Sigmoid colon (tissue), 7 donors: ENCODE measurements at regions of chr14 and their contacts with region 1.

Region 1: DNA sequence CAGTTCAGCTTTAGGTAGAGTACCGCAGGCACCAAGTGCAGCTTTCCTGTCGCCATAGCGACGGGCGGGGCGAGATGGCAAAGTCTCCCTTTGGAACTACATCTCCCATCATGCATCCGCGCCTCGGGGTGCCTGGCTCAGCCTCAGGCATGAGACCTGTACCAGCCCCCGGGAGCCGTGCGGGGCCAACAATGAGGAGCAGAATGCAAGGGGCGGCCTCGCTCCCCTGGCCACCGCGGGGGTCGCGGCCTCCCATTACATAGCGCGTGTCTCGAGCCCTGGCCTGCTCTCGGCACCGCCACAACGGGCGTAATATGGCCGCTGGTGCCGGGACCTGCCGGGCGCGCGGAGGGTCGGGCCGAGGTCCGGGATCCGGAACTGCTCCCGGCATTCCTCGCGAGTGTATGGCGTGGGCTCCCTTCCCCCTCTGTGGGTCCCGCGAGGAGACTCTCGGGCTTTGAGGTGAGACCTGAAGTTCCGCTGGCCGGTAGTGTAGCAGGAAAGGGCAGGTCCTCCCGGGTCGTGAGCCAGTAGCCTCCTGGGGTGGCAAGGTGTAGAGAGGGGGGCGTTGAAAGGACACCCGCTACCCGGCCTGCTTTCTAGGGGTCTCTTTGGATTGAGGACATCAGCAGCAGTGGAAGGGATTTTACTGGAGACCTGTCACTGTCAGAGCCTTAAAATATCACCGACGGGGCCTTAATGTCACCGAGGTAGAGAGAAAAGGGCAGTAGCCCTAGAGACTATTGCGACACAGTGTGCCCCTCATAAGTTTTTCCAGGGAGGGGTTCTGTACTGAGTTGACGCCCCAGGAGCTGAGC is at the start of gene THTPA:
- DNase-seq: peak; percentile 95
- H3K4me3 ChIP-seq: peak within 1 kb of the TSS; percentile 71 to 88 (median 82)
- H3K27ac ChIP-seq: peak within 1 kb of the TSS; percentile 93 to 98 (median 95)
- H3K4me1 ChIP-seq: peaks cover 0 to 37% (median 29%) of the 10 kb centered on the region in 4 donors
- H3K27me3 ChIP-seq: no peaks in the 10 kb centered on the region
- CTCF ChIP-seq: no peak
- EP300 ChIP-seq: peak in 1 of 4 donors; percentile 6
- POLR2A ChIP-seq: no peak
- total RNA-seq, gene THTPA: 8.9 to 30.6 (median 19.4) TPM

Region 2: GRCh38 chr14:23095196-23096108 is 460.6 kb before region 1 on chr14 and contains the start of gene C14orf119:
- intact Hi-C with region 1: loop called (anchors 10 kb)
- DNase-seq: peak; percentile 100
- H3K4me3 ChIP-seq: peak within 1 kb of the TSS; percentile 79 to 93 (median 90)
- H3K27ac ChIP-seq: peak within 1 kb of the TSS; percentile 97 to 99 (median 98)
- H3K4me1 ChIP-seq: peaks cover 0 to 49% (median 38%) of the 10 kb centered on the region in 4 donors
- H3K27me3 ChIP-seq: no peaks in the 10 kb centered on the region
- CTCF ChIP-seq: no peak
- EP300 ChIP-seq: peak in 1 of 4 donors; percentile 56
- POLR2A ChIP-seq: peak; percentile 86
- total RNA-seq, gene C14orf119: 22.4 to 38.9 (median 30.1) TPM

Region 3: GRCh38 chr14:23320774-23321571 is 235.1 kb before region 1 on chr14 and contains the start of gene PABPN1:
- intact Hi-C with region 1: loop called (anchors 10 kb)
- DNase-seq: peak; percentile 100
- H3K4me3 ChIP-seq: peak within 1 kb of the TSS; percentile 95 to 99 (median 98)
- H3K27ac ChIP-seq: peak within 1 kb of the TSS; percentile 97 to 99 (median 98)
- H3K4me1 ChIP-seq: peaks cover 0 to 29% (median 21%) of the 10 kb centered on the region in 4 donors
- H3K27me3 ChIP-seq: no peaks in the 10 kb centered on the region
- CTCF ChIP-seq: no peak
- EP300 ChIP-seq: peak in 1 of 4 donors; percentile 24
- POLR2A ChIP-seq: peak in 1 of 2 donors; percentile 6
- total RNA-seq, gene PABPN1: 38.3 to 71.5 (median 48.3) TPM

Region 4: GRCh38 chr14:23366426-23366921 is 189.6 kb before region 1 on chr14:
- intact Hi-C with region 1: loop called (anchors 5 kb)
- DNase-seq: peak; percentile 90
- H3K4me3 ChIP-seq: peak overlapping the region; percentile 42 to 75 (median 65)
- H3K27ac ChIP-seq: peak overlapping the region; percentile 92 to 98 (median 94)
- H3K4me1 ChIP-seq: peaks cover 0 to 53% (median 32%) of the 10 kb centered on the region in 4 donors
- H3K27me3 ChIP-seq: no peaks in the 10 kb centered on the region
- CTCF ChIP-seq: no peak
- EP300 ChIP-seq: no peak
- POLR2A ChIP-seq: no peak

Region 5: GRCh38 chr14:24114536-24115450 is 558.7 kb after region 1 on chr14 and contains the starts of genes DCAF11 and NRL:
- intact Hi-C with region 1: loop called (anchors 10 kb)
- DNase-seq: peak; percentile 100
- H3K4me3 ChIP-seq: peak within 1 kb of the TSS; percentile 66 to 85 (median 74)
- H3K27ac ChIP-seq: peak within 1 kb of the TSS; percentile 95 to 99 (median 98)
- H3K4me1 ChIP-seq: peaks cover 0 to 19% (median 18%) of the 10 kb centered on the region in 4 donors
- H3K27me3 ChIP-seq: no peaks in the 10 kb centered on the region
- CTCF ChIP-seq: no peak
- EP300 ChIP-seq: peak in 3 of 4 donors; percentile 81 to 90 (median 89)
- POLR2A ChIP-seq: no peak
- total RNA-seq, gene DCAF11: 37.7 to 82.9 (median 54.8) TPM
- total RNA-seq, gene NRL: 0.71 to 2.2 (median 1.4) TPM

Region 6: DNA sequence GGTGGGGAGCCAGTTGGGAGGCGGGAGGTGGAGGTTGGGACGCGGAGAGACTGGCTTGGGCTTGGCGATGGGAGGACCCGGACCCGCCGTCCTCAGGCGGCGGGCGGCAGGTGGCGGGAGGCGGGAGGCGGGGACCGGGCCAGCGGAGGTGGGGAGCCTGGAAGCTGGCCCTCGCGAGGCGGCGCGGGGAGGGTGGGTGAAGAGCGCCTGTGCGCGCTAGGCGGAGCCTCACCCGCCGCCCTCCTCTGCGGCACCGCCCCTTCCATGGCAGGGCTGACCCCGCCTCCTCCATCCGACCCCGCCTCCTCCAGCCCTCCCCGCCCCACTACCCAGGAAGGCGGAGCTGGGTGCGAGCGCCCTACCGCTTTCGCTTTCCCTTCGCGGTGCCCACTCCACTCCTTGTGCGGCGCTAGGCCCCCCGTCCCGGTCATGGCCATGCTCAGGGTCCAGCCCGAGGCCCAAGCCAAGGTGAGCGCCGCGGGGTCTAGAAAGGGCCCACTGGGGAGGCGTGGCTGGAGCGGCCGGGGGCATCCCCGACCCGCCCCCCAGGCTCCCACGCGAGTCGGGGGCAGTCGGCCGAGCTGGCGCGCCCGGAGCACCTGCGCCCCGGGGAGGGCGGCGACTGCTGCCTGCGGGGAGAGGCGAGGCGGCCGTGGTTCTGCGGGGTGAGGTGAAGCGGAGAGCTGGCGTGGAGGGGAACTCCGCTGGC is 579.9 kb after region 1 on chr14 and contains the start of gene PSME1:
- intact Hi-C with region 1: loop called (anchors 5 kb)
- DNase-seq: peak; percentile 97
- H3K4me3 ChIP-seq: peak within 1 kb of the TSS; percentile 85 to 99 (median 96)
- H3K27ac ChIP-seq: peak within 1 kb of the TSS; percentile 93 to 95 (median 94)
- H3K4me1 ChIP-seq: peaks cover 0 to 44% (median 36%) of the 10 kb centered on the region in 4 donors
- H3K27me3 ChIP-seq: no peaks in the 10 kb centered on the region
- CTCF ChIP-seq: no peak
- EP300 ChIP-seq: peak in 1 of 4 donors; percentile 3
- POLR2A ChIP-seq: peak in 1 of 2 donors; percentile 62
- total RNA-seq, gene PSME1: 129 to 186 (median 152) TPM

Region 7: GRCh38 chr14:24442273-24443052 is 886.4 kb after region 1 on chr14 and contains the start of gene SDR39U1:
- intact Hi-C with region 1: loop called (anchors 10 kb)
- DNase-seq: peak; percentile 99
- H3K4me3 ChIP-seq: peak within 1 kb of the TSS; percentile 66 to 80 (median 70)
- H3K27ac ChIP-seq: peak within 1 kb of the TSS; percentile 95 to 99 (median 98)
- H3K4me1 ChIP-seq: peaks cover 0 to 31% (median 29%) of the 10 kb centered on the region in 4 donors
- H3K27me3 ChIP-seq: no peaks in the 10 kb centered on the region
- CTCF ChIP-seq: no peak
- EP300 ChIP-seq: no peak
- POLR2A ChIP-seq: peak; percentile 76 to 80
- total RNA-seq, gene SDR39U1: 30.3 to 45.4 (median 33.9) TPM